Mucosa of descending colon (tissue), 3 donors: ENCODE measurements at regions of chr13 and their contacts with region 1.

Region 1: DNA sequence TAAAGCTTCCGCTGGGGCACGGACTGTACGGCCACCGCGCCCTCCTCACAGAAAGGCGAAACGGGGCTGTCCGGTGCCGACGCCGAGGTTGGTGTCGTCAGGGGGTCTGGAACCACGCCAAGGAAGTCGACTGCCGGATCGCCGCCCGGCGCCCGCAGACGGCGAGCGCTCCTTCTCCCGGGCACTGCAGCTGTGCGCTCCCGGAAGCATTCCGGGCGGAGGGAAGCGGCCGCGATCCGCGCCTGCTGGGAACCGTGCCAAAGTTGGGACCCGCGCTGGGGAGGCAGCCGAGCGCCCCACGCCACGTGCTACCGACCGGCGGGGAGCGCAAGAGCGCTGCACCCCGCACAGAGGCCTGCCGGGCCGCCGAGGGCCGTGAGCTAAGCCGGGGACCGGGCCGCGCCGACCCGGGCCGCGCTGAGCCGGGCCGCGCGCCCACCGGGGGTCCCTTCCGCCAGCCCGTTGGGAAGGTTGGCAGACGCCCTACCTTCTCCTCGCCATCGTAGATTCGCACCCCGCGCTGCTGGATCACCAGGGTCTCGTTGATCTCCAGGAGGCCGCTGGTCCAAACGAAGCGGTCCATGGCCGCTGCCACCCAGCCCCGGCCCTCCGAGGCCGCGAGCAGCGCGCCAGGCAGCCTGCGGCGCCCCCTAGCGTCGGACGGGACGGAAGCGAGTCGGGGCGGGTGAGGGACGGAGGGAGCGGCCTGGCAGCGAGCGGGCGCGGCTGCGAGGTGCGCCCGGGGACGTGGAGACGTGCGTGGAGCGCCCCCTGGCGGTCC is at the start of gene VPS36:
- DNase-seq: peak; percentile 97 to 99 (median 98)
- ATAC-seq: peak; percentile 92
- H3K4me3 ChIP-seq: peak within 1 kb of the TSS; percentile 94
- H3K4me1 ChIP-seq: peaks cover 20% of the 10 kb centered on the region
- CTCF ChIP-seq: peak; percentile 100
- total RNA-seq, gene VPS36: 44.3 to 71.3 (median 58.1) TPM

Region 2: GRCh38 chr13:52348983-52349780 is 101.0 kb before region 1 on chr13:
- intact Hi-C with region 1: loop called in 1 of 2 experiments (anchors 10 kb)
- DNase-seq: peak in 1 of 3 donors; percentile 5
- ATAC-seq: peak; percentile 73
- H3K4me3 ChIP-seq: no peak overlapping the region
- H3K4me1 ChIP-seq: no peaks in the 10 kb centered on the region
- CTCF ChIP-seq: no peak

Region 3: GRCh38 chr13:52617070-52618060 is 167.2 kb after region 1 on chr13:
- intact Hi-C with region 1: no loop called
- DNase-seq: peak; percentile 81 to 89 (median 83)
- ATAC-seq: peak; percentile 99
- H3K4me3 ChIP-seq: peak overlapping the region; percentile 44
- H3K4me1 ChIP-seq: peaks cover 9% of the 10 kb centered on the region
- CTCF ChIP-seq: no peak

Region 4: GRCh38 chr13:52686381-52686780 is 236.2 kb after region 1 on chr13:
- intact Hi-C with region 1: no loop called
- DNase-seq: no peak
- ATAC-seq: no peak
- H3K4me3 ChIP-seq: no peak overlapping the region
- H3K4me1 ChIP-seq: no peaks in the 10 kb centered on the region
- CTCF ChIP-seq: no peak

Region 5: GRCh38 chr13:53311561-53311960 is 861.4 kb after region 1 on chr13:
- intact Hi-C with region 1: no loop called
- DNase-seq: no peak
- ATAC-seq: no peak
- H3K4me3 ChIP-seq: no peak overlapping the region
- H3K4me1 ChIP-seq: no peaks in the 10 kb centered on the region
- CTCF ChIP-seq: no peak